ENCODE measurements at regions of chr6 and their contacts with region 1.

Region 1: GRCh38 chr6:11653028-11653583 is 115.6 kb downstream of the TMEM170B start:
- DNase-seq: peak in 5 of 9 donors; percentile 3 to 48 (median 9)
- ATAC-seq: peak; percentile 49
- H3K4me3 ChIP-seq: no peak overlapping the region
- H3K4me3 Mint-ChIP-seq: peak overlapping the region in 1 of 10 donors; percentile 3
- H3K27ac ChIP-seq: no peak overlapping the region
- H3K27ac Mint-ChIP-seq: peak overlapping the region in 4 of 9 donors; percentile 8 to 70 (median 24)
- H3K4me1 ChIP-seq: peaks cover 0 to 4% of the 10 kb centered on the region in 2 donors
- H3K4me1 Mint-ChIP-seq: peaks cover 0 to 19% (median 5%) of the 10 kb centered on the region in 7 donors
- H3K27me3 ChIP-seq: no peaks in the 10 kb centered on the region
- H3K27me3 Mint-ChIP-seq: peaks cover 0 to 4% (median 0%) of the 10 kb centered on the region in 5 donors

Region 2: GRCh38 chr6:10847684-10848083 is 805.4 kb before region 1 on chr6:
- CTCF ChIA-PET with region 1: no interaction called
- POLR2A ChIA-PET with region 1: no interaction called
- intact Hi-C with region 1: no loop called
- DNase-seq: no peak
- ATAC-seq: no peak
- H3K4me3 ChIP-seq: no peak overlapping the region
- H3K4me3 Mint-ChIP-seq: no peak overlapping the region
- H3K27ac ChIP-seq: no peak overlapping the region
- H3K27ac Mint-ChIP-seq: no peak overlapping the region
- H3K4me1 ChIP-seq: no peaks in the 10 kb centered on the region
- H3K4me1 Mint-ChIP-seq: no peaks in the 10 kb centered on the region
- H3K27me3 ChIP-seq: no peaks in the 10 kb centered on the region
- H3K27me3 Mint-ChIP-seq: peaks cover 6 to 32% (median 13%) of the 10 kb centered on the region in 5 donors

Region 3: DNA sequence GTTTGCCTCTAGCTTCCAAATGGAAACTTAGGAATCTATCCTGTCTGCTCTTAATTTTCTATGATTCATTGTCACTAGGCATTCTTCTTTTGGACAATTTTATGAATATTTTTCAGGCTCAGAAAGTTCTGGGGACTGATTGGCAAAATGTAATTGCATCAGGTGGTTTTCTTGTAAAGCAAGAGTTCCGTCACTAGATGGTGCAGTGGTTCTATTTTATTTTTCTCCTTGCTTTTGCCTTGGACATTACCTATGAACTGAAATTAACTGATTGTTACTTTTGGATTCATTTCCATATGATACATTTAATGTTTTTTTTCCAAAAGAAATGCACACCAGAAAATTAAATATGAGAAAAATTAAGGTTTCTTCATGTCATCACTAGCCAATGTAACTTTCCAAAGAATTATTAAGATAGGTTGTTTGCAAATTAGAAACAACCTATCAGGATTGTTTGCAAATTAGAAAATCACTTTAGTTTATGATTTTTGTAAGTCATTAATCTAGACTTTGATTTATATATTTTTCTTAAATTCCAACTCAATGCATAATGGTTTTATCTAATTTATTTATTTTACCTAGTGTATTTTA is 67.6 kb before region 1 on chr6:
- CTCF ChIA-PET with region 1: no interaction called
- POLR2A ChIA-PET with region 1: no interaction called
- intact Hi-C with region 1: loop called in 1 of 2 experiments (anchors 2 kb)
- DNase-seq: peak in 4 of 9 donors; percentile 9 to 23 (median 10)
- ATAC-seq: no peak
- H3K4me3 ChIP-seq: no peak overlapping the region
- H3K4me3 Mint-ChIP-seq: no peak overlapping the region
- H3K27ac ChIP-seq: no peak overlapping the region
- H3K27ac Mint-ChIP-seq: no peak overlapping the region
- H3K4me1 ChIP-seq: no peaks in the 10 kb centered on the region
- H3K4me1 Mint-ChIP-seq: no peaks in the 10 kb centered on the region
- H3K27me3 ChIP-seq: no peaks in the 10 kb centered on the region
- H3K27me3 Mint-ChIP-seq: peaks cover 0 to 19% (median 0%) of the 10 kb centered on the region in 5 donors

Region 4: GRCh38 chr6:11711003-11711983 is 58.2 kb after region 1 on chr6:
- CTCF ChIA-PET with region 1: no interaction called
- POLR2A ChIA-PET with region 1: no interaction called
- intact Hi-C with region 1: loop called in 1 of 2 experiments (anchors 5 kb)
- DNase-seq: peak in 8 of 9 donors; percentile 22 to 79 (median 38)
- ATAC-seq: peak; percentile 28
- H3K4me3 ChIP-seq: peak overlapping the region; percentile 13
- H3K4me3 Mint-ChIP-seq: peak overlapping the region; percentile 71 to 86 (median 75)
- H3K27ac ChIP-seq: peak overlapping the region; percentile 67
- H3K27ac Mint-ChIP-seq: peak overlapping the region; percentile 90 to 100 (median 97)
- H3K4me1 ChIP-seq: peaks cover 16 to 84% of the 10 kb centered on the region in 2 donors
- H3K4me1 Mint-ChIP-seq: peaks cover 55 to 92% (median 89%) of the 10 kb centered on the region in 7 donors
- H3K27me3 ChIP-seq: no peaks in the 10 kb centered on the region
- H3K27me3 Mint-ChIP-seq: no peaks in the 10 kb centered on the region

Region 5: GRCh38 chr6:12075067-12075563 is 422.0 kb after region 1 on chr6:
- CTCF ChIA-PET with region 1: interaction called, 10 read pairs
- POLR2A ChIA-PET with region 1: no interaction called
- intact Hi-C with region 1: loop called (anchors 1 to 2 kb)
- DNase-seq: peak in 6 of 9 donors; percentile 19 to 58 (median 38)
- ATAC-seq: peak; percentile 61
- H3K4me3 ChIP-seq: no peak overlapping the region
- H3K4me3 Mint-ChIP-seq: peak overlapping the region in 8 of 10 donors; percentile 5 to 69 (median 38)
- H3K27ac ChIP-seq: no peak overlapping the region
- H3K27ac Mint-ChIP-seq: peak overlapping the region in 5 of 9 donors; percentile 41 to 60 (median 54)
- H3K4me1 ChIP-seq: peaks cover 0 to 18% of the 10 kb centered on the region in 2 donors
- H3K4me1 Mint-ChIP-seq: peaks cover 31 to 83% (median 68%) of the 10 kb centered on the region in 7 donors
- H3K27me3 ChIP-seq: no peaks in the 10 kb centered on the region
- H3K27me3 Mint-ChIP-seq: no peaks in the 10 kb centered on the region

Region 6: DNA sequence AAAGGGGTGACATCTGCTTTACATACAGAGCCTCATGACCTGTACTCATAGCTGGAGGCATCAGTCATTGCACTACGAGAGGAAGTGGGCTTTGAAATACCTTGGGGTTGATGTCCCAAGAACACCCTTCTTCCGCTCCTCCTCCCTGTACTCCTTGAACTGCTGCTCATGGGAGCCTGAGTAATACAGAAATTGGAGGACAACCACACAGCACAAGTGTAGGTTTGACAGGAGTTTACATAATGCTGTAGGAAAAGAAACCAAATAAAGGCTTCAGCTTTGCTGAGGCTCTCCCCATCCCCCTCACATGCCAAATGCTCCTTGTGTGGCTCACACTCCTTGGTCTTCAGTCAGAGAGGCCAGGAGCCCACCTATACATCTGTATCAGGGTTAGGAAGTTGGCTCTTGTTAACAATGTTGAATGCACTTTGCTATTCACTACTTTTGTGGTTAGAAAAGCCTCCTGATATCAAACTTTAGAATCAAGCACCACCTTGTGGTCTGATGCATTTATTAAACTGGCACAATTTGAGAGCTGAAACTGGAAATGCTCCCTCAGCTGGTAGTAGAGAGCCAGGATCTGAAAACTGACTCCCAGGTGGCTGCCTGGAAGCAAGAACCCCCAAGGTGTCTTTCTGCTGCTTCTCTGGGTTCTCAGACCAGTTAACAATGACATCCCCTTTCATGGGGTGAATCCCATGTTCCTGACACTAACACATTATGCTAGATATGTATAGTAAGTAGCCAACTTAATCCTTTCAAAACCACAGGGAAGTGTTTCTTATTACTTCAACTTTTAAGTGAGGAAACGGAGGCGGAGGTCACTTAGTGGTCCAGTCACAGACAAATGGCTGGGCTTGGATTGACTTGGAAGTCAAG is 580.8 kb after region 1 on chr6:
- CTCF ChIA-PET with region 1: interaction called, 37 read pairs
- POLR2A ChIA-PET with region 1: no interaction called
- intact Hi-C with region 1: loop called (anchors 1 kb)
- DNase-seq: peak; percentile 8 to 79 (median 66)
- ATAC-seq: peak; percentile 83
- H3K4me3 ChIP-seq: no peak overlapping the region
- H3K4me3 Mint-ChIP-seq: peak overlapping the region in 4 of 10 donors; percentile 6 to 55 (median 10)
- H3K27ac ChIP-seq: no peak overlapping the region
- H3K27ac Mint-ChIP-seq: peak overlapping the region in 4 of 9 donors; percentile 18 to 55 (median 38)
- H3K4me1 ChIP-seq: peaks cover 13 to 16% of the 10 kb centered on the region in 2 donors
- H3K4me1 Mint-ChIP-seq: peaks cover 12 to 37% (median 22%) of the 10 kb centered on the region in 7 donors
- H3K27me3 ChIP-seq: no peaks in the 10 kb centered on the region
- H3K27me3 Mint-ChIP-seq: peaks cover 0 to under 1% (median 0%) of the 10 kb centered on the region in 5 donors

Region 7: GRCh38 chr6:12504319-12504966 is 851.3 kb after region 1 on chr6:
- CTCF ChIA-PET with region 1: no interaction called
- POLR2A ChIA-PET with region 1: no interaction called
- intact Hi-C with region 1: loop called in 1 of 2 experiments (anchors 5 kb)
- DNase-seq: no peak
- ATAC-seq: peak; percentile 36
- H3K4me3 ChIP-seq: no peak overlapping the region
- H3K4me3 Mint-ChIP-seq: no peak overlapping the region
- H3K27ac ChIP-seq: no peak overlapping the region
- H3K27ac Mint-ChIP-seq: no peak overlapping the region
- H3K4me1 ChIP-seq: no peaks in the 10 kb centered on the region
- H3K4me1 Mint-ChIP-seq: no peaks in the 10 kb centered on the region
- H3K27me3 ChIP-seq: no peaks in the 10 kb centered on the region
- H3K27me3 Mint-ChIP-seq: peaks cover 2 to 11% (median 9%) of the 10 kb centered on the region in 5 donors

Region 8: GRCh38 chr6:12895721-12896120 is 1242.6 kb after region 1 on chr6:
- CTCF ChIA-PET with region 1: no interaction called
- POLR2A ChIA-PET with region 1: no interaction called
- intact Hi-C with region 1: loop called in 1 of 2 experiments (anchors 2 kb)
- DNase-seq: no peak
- ATAC-seq: no peak
- H3K4me3 ChIP-seq: no peak overlapping the region
- H3K4me3 Mint-ChIP-seq: no peak overlapping the region
- H3K27ac ChIP-seq: no peak overlapping the region
- H3K27ac Mint-ChIP-seq: no peak overlapping the region
- H3K4me1 ChIP-seq: no peaks in the 10 kb centered on the region
- H3K4me1 Mint-ChIP-seq: no peaks in the 10 kb centered on the region
- H3K27me3 ChIP-seq: peaks cover 0 to 4% of the 10 kb centered on the region in 2 donors
- H3K27me3 Mint-ChIP-seq: peaks cover 6 to 47% (median 41%) of the 10 kb centered on the region in 5 donors